ENCODE measurements at regions of chr9 and their contacts with region 1.

Region 1: GRCh38 chr9:38694676-38695075 is 25.3 kb downstream of the FAM240B start:
- DNase-seq: no peak
- H3K4me3 ChIP-seq: no peak overlapping the region
- H3K27ac ChIP-seq: no peak overlapping the region
- H3K4me1 ChIP-seq: no peaks in the 10 kb centered on the region
- H3K27me3 ChIP-seq: no peaks in the 10 kb centered on the region
- CTCF ChIP-seq: no peak
- EP300 ChIP-seq: no peak
- POLR2A ChIP-seq: no peak

Region 2: DNA sequence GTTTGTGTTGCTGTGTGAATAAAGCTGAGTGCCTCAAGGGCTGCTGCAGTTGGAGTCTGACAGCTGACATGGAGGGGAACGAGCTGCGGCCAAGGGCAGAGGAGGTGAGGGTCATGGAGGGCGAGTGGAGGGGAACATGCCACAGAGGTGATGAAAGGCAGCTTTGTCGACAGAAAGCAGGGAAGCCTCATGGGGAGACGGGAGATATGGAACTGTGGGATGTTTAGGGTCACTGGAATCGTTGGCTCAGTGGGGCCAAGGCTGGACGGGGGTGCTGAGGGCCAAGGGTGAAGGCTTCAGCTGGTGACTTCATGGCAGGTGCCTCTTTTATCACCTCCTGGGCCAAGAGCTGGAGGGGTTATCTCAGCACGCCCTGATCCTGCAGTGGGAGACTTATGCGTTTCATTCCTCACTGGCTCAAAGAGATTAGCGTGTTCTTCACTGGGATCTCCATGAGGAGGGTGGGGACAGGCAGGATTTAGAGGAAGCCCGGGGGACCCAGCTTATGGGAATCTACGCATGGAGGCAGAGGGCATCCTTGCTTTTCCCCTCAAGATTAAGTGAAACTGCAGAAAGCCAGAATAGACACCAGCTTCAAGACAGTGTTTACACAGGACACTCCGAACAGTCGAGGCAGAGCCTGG is 16.9 kb before region 1 on chr9:
- in situ Hi-C with region 1: no loop called
- intact Hi-C with region 1: loop called (anchors 1 kb)
- DNase-seq: no peak
- H3K4me3 ChIP-seq: no peak overlapping the region
- H3K27ac ChIP-seq: no peak overlapping the region
- H3K4me1 ChIP-seq: no peaks in the 10 kb centered on the region
- H3K27me3 ChIP-seq: no peaks in the 10 kb centered on the region
- CTCF ChIP-seq: no peak
- EP300 ChIP-seq: no peak
- POLR2A ChIP-seq: no peak

Measured in transverse colon (tissue), 4 donors.